Posterior cingulate gyrus (tissue), 11 donors: ENCODE measurements at regions of chr1 and their contacts with region 1.

Region 1: DNA sequence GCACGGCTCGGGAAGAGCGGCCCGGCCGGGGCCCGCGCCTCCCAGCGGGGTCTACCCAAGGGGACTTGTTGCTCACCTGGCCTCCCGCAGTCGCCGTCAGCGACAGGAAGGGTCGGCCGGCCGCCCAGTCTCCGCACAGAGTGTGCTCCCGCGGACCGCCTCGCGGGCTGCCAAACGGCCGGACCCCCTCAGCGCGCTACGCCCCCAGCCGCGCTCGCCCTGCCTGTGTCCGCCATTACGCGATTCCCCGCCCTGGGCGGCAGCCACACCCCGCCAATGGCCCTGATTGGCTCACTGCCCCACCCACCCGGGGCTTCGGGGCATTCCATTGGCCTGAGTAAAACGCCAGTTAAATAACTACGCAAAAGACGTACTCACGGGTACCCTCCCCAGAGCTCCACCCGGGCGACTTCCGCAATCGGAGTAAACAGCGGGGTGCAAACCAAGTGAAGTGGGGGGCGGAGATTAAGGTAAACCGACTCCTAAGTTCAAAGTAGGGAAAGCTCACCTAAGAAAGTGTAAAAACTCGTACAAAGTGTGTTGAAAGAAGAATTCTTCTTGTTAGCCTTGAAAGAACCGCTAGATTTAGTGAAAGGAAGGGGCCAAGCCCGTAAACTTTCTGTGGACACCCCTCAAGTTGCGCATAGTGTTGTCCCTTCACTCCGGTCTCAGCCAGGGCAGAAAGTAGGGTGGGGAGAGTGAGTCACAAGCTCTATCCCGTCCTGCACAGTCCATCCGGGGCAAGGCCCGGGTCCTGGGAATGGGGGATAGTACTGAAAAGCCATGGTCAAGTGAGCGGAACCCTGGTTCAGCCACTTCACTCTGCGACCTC is at the start of gene WASF2:
- DNase-seq: peak; percentile 95 to 100 (median 98)

Region 2: GRCh38 chr1:27402349-27402754 is 87.8 kb before region 1 on chr1:
- intact Hi-C with region 1: no loop called
- DNase-seq: peak; percentile 44 to 95 (median 71)

Region 3: DNA sequence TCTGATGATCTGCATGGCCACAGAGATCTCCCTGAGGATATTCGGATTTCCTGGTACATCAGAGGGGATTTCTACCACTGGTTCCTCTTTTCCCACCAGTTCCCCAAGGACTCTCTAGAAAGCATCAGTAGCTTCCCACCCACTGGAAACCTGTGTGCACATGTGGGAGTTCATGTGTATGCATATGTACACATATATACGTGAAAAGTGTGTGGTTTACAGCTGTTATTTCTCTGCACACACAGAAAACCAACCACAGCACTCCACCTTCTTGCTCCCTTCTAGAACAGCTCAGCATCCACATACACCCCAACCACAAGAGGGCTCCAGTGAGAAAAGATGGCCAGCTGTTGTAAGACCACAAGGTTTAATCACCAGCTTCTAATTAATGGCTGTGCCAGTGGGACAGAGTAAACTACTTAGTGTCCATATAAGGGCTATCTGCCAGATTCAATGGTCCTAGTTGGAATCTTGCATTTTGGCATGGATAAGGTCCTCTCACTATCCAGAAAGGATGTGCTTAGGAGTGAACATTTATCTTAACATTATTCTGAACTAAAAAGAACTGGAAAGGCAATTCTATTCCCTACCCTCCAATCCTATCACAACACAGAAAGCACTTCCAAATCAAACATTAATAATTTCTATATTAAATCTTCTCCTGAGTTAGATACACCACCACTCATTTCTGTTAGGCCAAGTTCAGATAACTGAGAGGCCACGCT is 73.6 kb before region 1 on chr1:
- intact Hi-C with region 1: loop called (anchors 2 kb)
- DNase-seq: peak in 2 of 10 donors; percentile 35 to 38

Region 4: GRCh38 chr1:27525296-27526272 is 35.5 kb after region 1 on chr1:
- intact Hi-C with region 1: loop called (anchors 5 kb)
- DNase-seq: peak in 3 of 10 donors; percentile 37 to 93 (median 81)